ENCODE measurements at regions of chr7 and their contacts with region 1.

Region 1: DNA sequence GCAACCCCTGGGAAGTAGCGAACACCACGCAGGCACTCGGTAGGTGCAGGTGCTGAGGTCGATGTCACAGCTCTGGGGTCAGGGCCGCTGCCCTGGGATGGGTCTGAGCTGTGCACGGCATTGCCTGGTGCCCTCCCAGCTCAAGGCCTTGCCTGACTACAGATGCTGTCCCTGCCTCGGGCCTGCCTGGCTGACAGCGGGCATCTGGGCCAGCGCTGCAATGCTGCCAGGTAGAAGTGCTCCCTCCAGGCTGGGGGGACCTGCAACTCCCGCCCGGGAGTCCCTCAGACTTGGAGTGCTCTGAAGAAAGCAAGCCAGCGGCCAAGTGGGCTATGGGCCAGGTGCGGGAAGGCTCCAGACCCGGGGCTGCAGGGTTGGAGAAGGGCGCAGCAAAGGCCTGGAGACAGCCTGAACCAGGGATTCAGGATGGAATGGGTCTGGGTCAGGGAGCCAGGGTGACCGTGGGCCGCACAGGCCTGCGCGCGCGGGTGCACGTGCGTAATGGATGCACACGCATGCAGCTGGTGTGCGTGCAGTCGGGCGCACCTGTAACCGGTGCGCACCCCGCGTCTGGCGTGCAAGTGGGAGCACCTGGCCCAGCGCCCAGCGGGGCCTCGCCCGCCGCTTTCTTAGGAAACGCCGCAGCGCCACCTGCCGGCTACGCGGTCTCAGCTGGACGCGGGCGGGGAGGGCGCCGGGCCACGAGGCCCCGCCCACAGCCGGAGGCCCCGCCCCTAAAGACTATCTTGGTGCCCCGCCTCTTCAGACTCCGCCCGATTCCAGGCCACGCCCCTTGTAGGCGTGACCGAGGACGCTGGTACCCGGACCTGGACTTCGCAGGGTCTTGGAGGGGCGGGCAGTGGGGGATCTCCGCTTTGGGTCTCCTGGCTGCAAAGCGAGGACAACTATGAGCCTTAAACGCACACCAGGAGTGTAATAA is 46.7 kb downstream of the MICALL2 start:
- DNase-seq: peak; percentile 90
- H3K4me3 ChIP-seq: no peak overlapping the region
- H3K27ac ChIP-seq: no peak overlapping the region
- H3K4me1 ChIP-seq: peaks cover 15% of the 10 kb centered on the region
- H3K27me3 ChIP-seq: no peaks in the 10 kb centered on the region
- CTCF ChIP-seq: peak; percentile 85

Region 2: DNA sequence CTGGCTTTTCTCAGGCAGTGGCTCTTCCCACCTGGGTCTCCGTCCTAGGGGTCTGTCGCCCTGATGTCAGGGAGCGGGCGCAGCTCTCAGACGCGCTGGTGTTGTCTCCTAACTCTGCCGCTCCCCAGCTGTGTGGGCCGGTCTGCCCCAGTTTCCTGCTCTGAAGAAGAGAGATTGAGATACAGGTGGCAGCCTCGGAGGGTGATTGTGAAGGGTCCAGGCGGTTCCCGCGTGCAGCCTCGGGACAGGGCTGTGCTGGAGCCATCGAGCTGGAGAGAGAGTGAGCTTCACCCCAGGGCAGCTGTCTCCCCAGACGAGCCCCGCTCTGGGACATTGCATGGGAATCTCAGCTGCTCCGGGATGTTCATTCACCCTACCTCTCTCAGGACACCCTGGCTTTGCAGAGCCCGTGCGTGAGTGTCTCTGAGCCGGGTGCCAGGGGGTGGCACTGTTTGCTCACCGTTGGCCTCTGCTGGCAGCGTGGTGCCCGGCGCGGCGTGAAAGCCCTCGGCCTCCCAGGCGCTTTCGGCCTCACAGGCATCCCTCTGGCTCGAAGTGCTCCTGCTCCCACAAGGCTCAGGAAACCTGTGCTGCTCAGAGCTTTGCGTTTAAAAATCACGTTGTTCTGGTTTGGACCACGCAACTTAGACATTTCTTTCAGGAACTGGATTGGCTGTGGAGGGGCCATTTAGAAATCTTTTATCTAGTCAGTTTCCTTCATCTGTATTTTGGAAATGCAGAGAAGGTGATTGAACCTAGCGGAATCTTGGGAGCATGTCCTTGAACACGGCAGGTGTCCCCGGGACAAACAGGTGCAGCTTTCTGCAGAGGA is 218.8 kb before region 1 on chr7:
- CTCF ChIA-PET with region 1: interaction called, 3 read pairs
- POLR2A ChIA-PET with region 1: no interaction called
- intact Hi-C with region 1: loop called (anchors 5 kb)
- DNase-seq: peak; percentile 81
- H3K4me3 ChIP-seq: no peak overlapping the region
- H3K27ac ChIP-seq: no peak overlapping the region
- H3K4me1 ChIP-seq: peaks cover 9% of the 10 kb centered on the region
- H3K27me3 ChIP-seq: no peaks in the 10 kb centered on the region
- CTCF ChIP-seq: peak; percentile 86

Region 3: GRCh38 chr7:1225441-1226185 is 187.0 kb before region 1 on chr7:
- CTCF ChIA-PET with region 1: no interaction called
- POLR2A ChIA-PET with region 1: interaction called, 8 read pairs
- intact Hi-C with region 1: loop called (anchors 1 kb)
- DNase-seq: no peak
- H3K4me3 ChIP-seq: peak overlapping the region; percentile 19
- H3K27ac ChIP-seq: peak overlapping the region; percentile 97
- H3K4me1 ChIP-seq: peaks cover 45% of the 10 kb centered on the region
- H3K27me3 ChIP-seq: no peaks in the 10 kb centered on the region
- CTCF ChIP-seq: peak; percentile 84

Region 4: GRCh38 chr7:1290026-1290678 is 122.4 kb before region 1 on chr7:
- CTCF ChIA-PET with region 1: interaction called, 11 read pairs
- POLR2A ChIA-PET with region 1: no interaction called
- intact Hi-C with region 1: no loop called
- DNase-seq: peak; percentile 89
- H3K4me3 ChIP-seq: peak overlapping the region; percentile 39
- H3K27ac ChIP-seq: peak overlapping the region; percentile 91
- H3K4me1 ChIP-seq: peaks cover 38% of the 10 kb centered on the region
- H3K27me3 ChIP-seq: no peaks in the 10 kb centered on the region
- CTCF ChIP-seq: peak; percentile 57

Region 5: GRCh38 chr7:1439373-1440363 is 27.1 kb after region 1 on chr7:
- CTCF ChIA-PET with region 1: interaction called, 14 read pairs
- POLR2A ChIA-PET with region 1: no interaction called
- intact Hi-C with region 1: no loop called
- DNase-seq: no peak
- H3K4me3 ChIP-seq: no peak overlapping the region
- H3K27ac ChIP-seq: no peak overlapping the region
- H3K4me1 ChIP-seq: no peaks in the 10 kb centered on the region
- H3K27me3 ChIP-seq: no peaks in the 10 kb centered on the region
- CTCF ChIP-seq: no peak

Region 6: GRCh38 chr7:1664711-1665548 is 252.3 kb after region 1 on chr7:
- CTCF ChIA-PET with region 1: no interaction called
- POLR2A ChIA-PET with region 1: no interaction called
- intact Hi-C with region 1: no loop called
- DNase-seq: peak; percentile 76
- H3K4me3 ChIP-seq: peak overlapping the region; percentile 49
- H3K27ac ChIP-seq: no peak overlapping the region
- H3K4me1 ChIP-seq: peaks cover 14% of the 10 kb centered on the region
- H3K27me3 ChIP-seq: peaks cover 57% of the 10 kb centered on the region
- CTCF ChIP-seq: peak; percentile 80